ENCODE measurements at regions of chr4 and their contacts with region 1.

Region 1: GRCh38 chr4:155953151-155954114 is at the start of gene CTSO:
- DNase-seq: peak; percentile 39 to 85 (median 73)
- ATAC-seq: peak; percentile 92
- H3K4me3 ChIP-seq: peak within 1 kb of the TSS; percentile 69 to 95
- H3K4me3 Mint-ChIP-seq: peak within 1 kb of the TSS; percentile 95
- H3K27ac ChIP-seq: peak within 1 kb of the TSS; percentile 91
- H3K27ac Mint-ChIP-seq: peak within 1 kb of the TSS; percentile 97
- H3K4me1 ChIP-seq: peaks cover 7% of the 10 kb centered on the region
- H3K4me1 Mint-ChIP-seq: peaks cover 35% of the 10 kb centered on the region
- H3K27me3 ChIP-seq: no peaks in the 10 kb centered on the region
- H3K27me3 Mint-ChIP-seq: peaks cover 8% of the 10 kb centered on the region
- CTCF ChIP-seq: peak; percentile 71
- total RNA-seq, gene CTSO: 5.9 to 6.1 TPM

Region 2: GRCh38 chr4:155376387-155377268 is 576.8 kb before region 1 on chr4 and contains the start of gene MAP9:
- CTCF ChIA-PET with region 1: interaction called, 4 read pairs
- POLR2A ChIA-PET with region 1: interaction called, 3 read pairs
- intact Hi-C with region 1: loop called (anchors 1 to 10 kb)
- DNase-seq: peak; percentile 78 to 98 (median 89)
- ATAC-seq: peak; percentile 88
- H3K4me3 ChIP-seq: peak within 1 kb of the TSS; percentile 77 to 84
- H3K4me3 Mint-ChIP-seq: peak within 1 kb of the TSS; percentile 90
- H3K27ac ChIP-seq: peak within 1 kb of the TSS; percentile 86 to 88
- H3K27ac Mint-ChIP-seq: peak within 1 kb of the TSS; percentile 89
- H3K4me1 ChIP-seq: peaks cover 8% of the 10 kb centered on the region
- H3K4me1 Mint-ChIP-seq: peaks cover 22% of the 10 kb centered on the region
- H3K27me3 ChIP-seq: no peaks in the 10 kb centered on the region
- H3K27me3 Mint-ChIP-seq: no peaks in the 10 kb centered on the region
- CTCF ChIP-seq: no peak
- total RNA-seq, gene MAP9: 17.2 to 18.6 TPM

Region 3: DNA sequence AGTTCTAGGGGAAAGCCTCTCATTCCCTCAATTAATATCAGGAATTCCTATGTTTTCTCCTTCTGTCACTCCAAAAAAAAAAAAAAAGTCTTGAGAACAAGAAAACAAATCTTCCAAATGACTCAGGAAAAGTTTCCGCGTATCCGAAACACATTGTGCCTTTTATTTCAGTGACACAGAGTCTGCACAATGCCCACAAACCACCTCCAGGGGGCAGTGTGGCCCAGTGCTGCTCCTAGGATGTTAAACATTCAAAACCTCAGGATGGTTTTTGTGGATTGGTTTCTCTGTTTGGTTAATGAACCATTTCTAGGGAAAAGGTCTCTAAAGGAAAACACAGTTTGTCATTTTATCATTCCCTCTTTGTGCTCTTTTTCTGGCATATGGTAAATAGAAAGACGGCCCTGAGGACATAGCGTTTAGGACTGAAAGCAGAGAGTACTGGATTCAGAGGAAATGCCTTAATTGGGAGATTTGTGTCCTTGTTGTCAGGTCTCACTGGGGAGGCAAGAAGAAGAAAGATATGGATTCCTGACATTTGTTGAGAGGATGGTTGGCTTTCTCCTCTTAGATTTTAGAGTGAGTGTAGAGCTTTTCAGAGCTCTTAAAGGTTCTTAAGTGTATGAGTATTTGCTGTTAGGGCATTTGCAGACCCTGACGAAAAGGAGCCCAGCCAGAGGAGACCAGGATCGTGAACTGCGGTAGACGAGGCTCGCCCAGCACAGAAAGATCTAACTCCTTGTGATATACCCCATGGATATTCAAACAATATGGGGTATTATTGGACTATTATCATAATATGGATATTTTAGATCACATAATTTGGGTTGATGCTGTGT is 510.9 kb before region 1 on chr4:
- CTCF ChIA-PET with region 1: no interaction called
- POLR2A ChIA-PET with region 1: no interaction called
- intact Hi-C with region 1: loop called (anchors 1 to 5 kb)
- DNase-seq: peak; percentile 4 to 62 (median 48)
- ATAC-seq: peak; percentile 56
- H3K4me3 ChIP-seq: no peak overlapping the region
- H3K4me3 Mint-ChIP-seq: no peak overlapping the region
- H3K27ac ChIP-seq: no peak overlapping the region
- H3K27ac Mint-ChIP-seq: no peak overlapping the region
- H3K4me1 ChIP-seq: no peaks in the 10 kb centered on the region
- H3K4me1 Mint-ChIP-seq: no peaks in the 10 kb centered on the region
- H3K27me3 ChIP-seq: no peaks in the 10 kb centered on the region
- H3K27me3 Mint-ChIP-seq: peaks cover 13% of the 10 kb centered on the region
- CTCF ChIP-seq: peak; percentile 89

Region 4: DNA sequence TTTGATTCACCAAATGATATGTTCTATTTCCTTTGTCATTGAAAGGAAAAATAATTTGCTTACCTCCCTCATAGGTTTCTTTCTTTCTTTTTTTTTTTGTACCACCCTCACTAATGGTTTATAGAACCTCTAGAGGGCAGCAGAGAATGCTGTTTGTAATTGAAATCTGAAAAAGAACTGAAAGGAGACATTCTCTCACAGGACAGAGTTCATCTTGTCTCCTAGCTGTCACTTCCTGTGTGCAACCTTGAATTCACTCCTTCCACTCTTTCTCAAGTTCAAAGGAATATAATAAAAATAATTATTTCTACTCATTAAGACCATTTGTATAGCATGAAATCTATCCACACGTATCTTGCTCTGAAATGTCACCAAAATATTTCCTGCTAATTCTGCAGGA is 143.6 kb before region 1 on chr4:
- CTCF ChIA-PET with region 1: interaction called, 3 read pairs
- POLR2A ChIA-PET with region 1: no interaction called
- intact Hi-C with region 1: loop called (anchors 1 to 5 kb)
- DNase-seq: peak in 2 of 9 experiments; percentile 49 to 69
- ATAC-seq: peak; percentile 69
- H3K4me3 ChIP-seq: no peak overlapping the region
- H3K4me3 Mint-ChIP-seq: no peak overlapping the region
- H3K27ac ChIP-seq: no peak overlapping the region
- H3K27ac Mint-ChIP-seq: no peak overlapping the region
- H3K4me1 ChIP-seq: no peaks in the 10 kb centered on the region
- H3K4me1 Mint-ChIP-seq: no peaks in the 10 kb centered on the region
- H3K27me3 ChIP-seq: no peaks in the 10 kb centered on the region
- H3K27me3 Mint-ChIP-seq: no peaks in the 10 kb centered on the region
- CTCF ChIP-seq: peak; percentile 68